ENCODE measurements at regions of chr1 and their contacts with region 1.

Region 1: DNA sequence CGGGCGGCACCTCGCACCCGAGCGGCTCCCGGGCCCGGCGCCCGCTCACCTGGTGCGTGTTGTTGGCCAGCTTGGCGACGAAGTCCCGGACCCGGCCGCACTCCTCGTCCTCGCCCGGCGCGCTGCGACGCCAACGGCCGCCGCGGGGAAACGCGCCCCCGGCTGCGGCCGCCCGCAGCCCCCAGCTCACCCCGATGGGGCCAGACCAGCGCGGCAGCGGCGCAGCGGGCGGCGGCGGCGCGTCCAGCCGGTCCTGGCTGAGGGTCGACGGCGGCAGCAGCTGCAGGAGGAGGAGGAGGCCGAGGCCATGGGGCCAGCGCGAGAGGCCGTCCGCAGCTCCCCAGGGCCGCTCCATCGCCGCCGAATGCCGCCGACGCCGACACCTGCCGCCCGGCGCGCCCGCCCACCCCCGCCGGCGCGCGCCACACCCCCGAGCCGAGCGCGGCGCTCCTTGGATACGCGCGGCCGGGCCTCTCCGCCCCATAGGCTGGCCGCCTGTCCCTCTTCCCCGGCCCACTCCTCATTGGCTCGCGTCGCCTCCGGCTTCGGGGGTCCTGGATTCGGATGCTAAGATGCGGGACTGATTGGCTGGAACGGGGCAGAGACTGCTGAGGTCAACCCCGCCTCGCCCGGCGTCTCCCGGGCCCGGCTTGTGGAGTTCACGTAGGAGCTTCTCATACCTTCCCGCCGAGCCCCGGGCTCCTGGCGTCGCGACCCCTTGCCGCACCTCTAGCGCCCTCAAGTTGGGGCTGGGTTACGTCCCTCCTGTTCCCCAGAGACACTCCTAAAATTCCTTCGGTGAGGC is at the start of gene SORT1:
- DNase-seq: peak; percentile 76
- ATAC-seq: peak; percentile 98
- H3K4me3 Mint-ChIP-seq: peak within 1 kb of the TSS; percentile 68
- H3K27ac Mint-ChIP-seq: no peak within 1 kb of the TSS
- H3K4me1 Mint-ChIP-seq: peaks cover 16% of the 10 kb centered on the region
- H3K27me3 Mint-ChIP-seq: peaks cover 39% of the 10 kb centered on the region
- total RNA-seq, gene SORT1: 5.3 to 8.5 TPM

Region 2: DNA sequence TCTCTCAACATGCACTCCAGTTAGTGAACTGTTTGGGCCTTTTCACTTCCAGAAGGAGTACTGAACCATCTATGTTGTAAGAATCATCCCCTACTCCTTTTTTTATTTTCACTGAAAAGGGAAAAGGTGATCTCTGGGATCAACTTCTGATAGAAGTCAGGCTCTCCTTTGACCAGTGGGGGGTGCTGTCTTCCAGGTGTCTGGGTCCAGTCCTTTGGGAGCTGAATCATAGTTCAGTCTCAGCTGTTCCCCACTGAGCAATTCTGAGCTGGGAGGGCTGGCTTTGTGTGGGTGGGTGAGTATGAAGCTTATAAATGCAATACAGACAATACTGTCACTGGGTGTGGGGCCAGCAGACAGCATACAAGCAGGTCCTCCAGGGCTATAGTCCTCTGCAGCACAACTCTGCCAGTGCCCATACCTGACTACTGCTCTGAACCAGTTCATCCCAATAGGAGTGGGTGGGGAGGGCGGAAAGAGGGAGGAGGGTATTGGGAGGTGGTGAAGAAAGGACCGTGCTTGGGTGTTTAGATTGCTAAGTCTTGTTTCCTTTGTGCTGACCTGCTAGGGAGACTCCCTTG is 196.5 kb before region 1 on chr1:
- CTCF ChIA-PET with region 1: interaction called, 15 read pairs
- DNase-seq: peak; percentile 65
- ATAC-seq: peak; percentile 59
- H3K4me3 Mint-ChIP-seq: no peak overlapping the region
- H3K27ac Mint-ChIP-seq: no peak overlapping the region
- H3K4me1 Mint-ChIP-seq: peaks cover 17% of the 10 kb centered on the region
- H3K27me3 Mint-ChIP-seq: no peaks in the 10 kb centered on the region

Region 3: DNA sequence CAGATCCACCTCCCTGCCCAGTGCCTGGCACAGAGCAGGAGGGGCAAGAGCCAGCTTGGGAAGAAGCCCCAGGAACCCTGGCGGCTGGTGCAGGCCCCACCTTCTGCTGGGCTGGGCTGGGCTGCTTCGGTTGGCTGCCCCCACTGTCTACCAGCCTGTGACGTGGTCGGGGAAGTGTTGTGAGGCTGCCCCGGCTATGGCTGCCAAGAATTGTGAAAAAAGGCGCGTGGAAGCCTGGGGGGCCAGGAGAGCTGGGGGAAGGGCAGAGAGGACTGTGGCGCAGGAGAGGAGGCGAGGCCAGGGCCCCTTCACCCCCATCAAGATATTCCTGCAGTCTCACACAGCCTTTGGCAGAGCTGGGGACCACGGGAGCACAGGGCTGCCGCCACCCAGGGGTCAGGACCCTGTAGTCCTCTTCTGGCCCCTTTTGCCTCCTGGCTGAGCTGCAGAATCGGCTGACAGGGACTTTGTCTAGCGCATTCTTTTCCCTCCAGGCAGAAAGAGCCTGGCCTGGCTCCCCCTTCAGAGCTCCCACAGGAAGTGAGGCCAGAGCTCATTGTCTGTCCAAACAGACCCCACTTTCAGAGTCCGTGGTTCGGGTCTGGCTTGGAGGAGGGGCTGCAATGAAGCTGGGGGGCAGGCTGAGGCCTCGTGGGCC is 144.1 kb before region 1 on chr1:
- CTCF ChIA-PET with region 1: interaction called, 10 read pairs
- DNase-seq: no peak
- ATAC-seq: no peak
- H3K4me3 Mint-ChIP-seq: no peak overlapping the region
- H3K27ac Mint-ChIP-seq: no peak overlapping the region
- H3K4me1 Mint-ChIP-seq: peaks cover 6% of the 10 kb centered on the region
- H3K27me3 Mint-ChIP-seq: peaks cover 10% of the 10 kb centered on the region

Region 4: DNA sequence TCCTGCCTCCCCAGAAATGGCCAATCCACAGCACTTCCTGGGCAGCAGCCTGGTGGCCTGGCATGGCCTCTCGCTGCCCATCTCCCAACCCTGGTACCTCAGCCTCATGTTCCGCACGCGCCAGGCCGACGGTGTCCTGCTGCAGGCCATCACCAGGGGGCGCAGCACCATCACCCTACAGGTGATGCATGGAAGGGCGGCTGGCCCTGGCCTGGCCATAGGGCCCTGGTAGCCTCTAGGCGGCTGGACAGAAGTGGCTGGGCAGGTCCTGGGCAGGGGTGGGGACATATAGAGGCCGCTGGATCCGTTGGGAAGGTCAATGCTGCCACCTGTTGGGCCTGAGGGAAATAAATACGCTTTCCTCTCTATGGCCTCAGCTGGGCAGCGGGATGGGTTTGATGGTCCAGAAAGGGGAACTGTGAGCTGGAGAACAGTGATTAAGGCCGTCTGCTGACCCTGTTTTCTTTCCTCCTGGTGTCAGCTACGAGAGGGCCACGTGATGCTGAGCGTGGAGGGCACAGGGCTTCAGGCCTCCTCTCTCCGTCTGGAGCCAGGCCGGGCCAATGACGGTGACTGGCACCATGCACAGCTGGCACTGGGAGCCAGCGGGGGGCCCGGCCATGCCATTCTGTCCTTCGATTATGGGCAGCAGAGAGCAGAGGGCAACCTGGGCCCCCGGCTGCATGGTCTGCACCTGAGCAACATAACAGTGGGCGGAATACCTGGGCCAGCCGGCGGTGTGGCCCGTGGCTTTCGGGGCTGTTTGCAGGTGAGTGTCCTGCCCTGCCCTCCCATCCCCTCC is 133.9 kb before region 1 on chr1:
- CTCF ChIA-PET with region 1: interaction called, 55 read pairs
- DNase-seq: peak; percentile 83
- ATAC-seq: peak; percentile 95
- H3K4me3 Mint-ChIP-seq: no peak overlapping the region
- H3K27ac Mint-ChIP-seq: no peak overlapping the region
- H3K4me1 Mint-ChIP-seq: peaks cover 2% of the 10 kb centered on the region
- H3K27me3 Mint-ChIP-seq: no peaks in the 10 kb centered on the region

Region 5: GRCh38 chr1:109282952-109283747 is 114.6 kb before region 1 on chr1 and contains the start of gene PSRC1:
- CTCF ChIA-PET with region 1: interaction called, 196 read pairs
- DNase-seq: peak; percentile 94
- ATAC-seq: peak; percentile 97
- H3K4me3 Mint-ChIP-seq: peak within 1 kb of the TSS; percentile 98
- H3K27ac Mint-ChIP-seq: peak within 1 kb of the TSS; percentile 96
- H3K4me1 Mint-ChIP-seq: peaks cover 25% of the 10 kb centered on the region
- H3K27me3 Mint-ChIP-seq: no peaks in the 10 kb centered on the region
- total RNA-seq, gene PSRC1: 19.6 to 36.1 TPM

Region 6: DNA sequence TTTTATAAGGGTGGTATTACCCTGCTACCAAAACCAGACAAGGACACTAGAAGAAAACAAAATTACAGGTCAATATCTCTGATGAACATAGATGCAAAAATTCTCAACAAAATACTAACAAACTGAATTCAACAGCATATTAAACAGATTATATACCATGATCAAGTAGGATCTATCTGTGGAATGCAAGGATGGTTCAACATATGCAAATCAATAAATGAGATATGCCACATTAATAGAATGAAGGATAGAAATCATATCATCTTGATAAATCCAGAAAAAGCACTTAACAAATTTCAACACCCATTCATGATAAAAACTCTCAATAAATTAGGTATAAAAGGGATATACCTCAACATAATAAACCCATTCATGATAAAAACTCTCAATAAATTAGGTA is 66.6 kb before region 1 on chr1:
- CTCF ChIA-PET with region 1: no interaction called
- DNase-seq: no peak
- ATAC-seq: no peak
- H3K4me3 Mint-ChIP-seq: no peak overlapping the region
- H3K27ac Mint-ChIP-seq: no peak overlapping the region
- H3K4me1 Mint-ChIP-seq: no peaks in the 10 kb centered on the region
- H3K27me3 Mint-ChIP-seq: peaks cover 11% of the 10 kb centered on the region

Region 7: DNA sequence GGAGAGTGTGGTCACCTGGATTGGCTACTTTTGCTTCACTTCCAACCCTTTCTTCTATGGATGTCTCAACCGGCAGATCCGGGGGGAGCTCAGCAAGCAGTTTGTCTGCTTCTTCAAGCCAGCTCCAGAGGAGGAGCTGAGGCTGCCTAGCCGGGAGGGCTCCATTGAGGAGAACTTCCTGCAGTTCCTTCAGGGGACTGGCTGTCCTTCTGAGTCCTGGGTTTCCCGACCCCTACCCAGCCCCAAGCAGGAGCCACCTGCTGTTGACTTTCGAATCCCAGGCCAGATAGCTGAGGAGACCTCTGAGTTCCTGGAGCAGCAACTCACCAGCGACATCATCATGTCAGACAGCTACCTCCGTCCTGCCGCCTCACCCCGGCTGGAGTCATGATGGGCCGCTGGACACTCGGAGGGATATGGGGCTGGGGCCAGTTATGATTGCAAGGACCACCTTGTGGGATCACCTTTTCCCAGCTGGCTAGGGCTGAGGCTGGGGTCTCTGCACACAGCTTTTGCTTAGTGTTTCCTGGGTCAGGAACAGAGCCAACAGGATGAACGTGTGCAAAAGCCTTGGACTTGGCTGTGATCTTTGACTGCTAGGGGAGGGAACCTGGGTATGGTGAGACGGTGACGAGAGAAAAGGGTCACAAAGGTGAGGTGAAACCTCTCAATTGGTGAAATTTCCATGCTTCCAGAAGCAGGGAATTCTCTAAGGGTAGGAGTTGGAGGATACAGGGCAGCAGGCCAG is 146.4 kb after region 1 on chr1:
- CTCF ChIA-PET with region 1: no interaction called
- DNase-seq: no peak
- ATAC-seq: no peak
- H3K4me3 Mint-ChIP-seq: no peak overlapping the region
- H3K27ac Mint-ChIP-seq: no peak overlapping the region
- H3K4me1 Mint-ChIP-seq: peaks cover 12% of the 10 kb centered on the region
- H3K27me3 Mint-ChIP-seq: peaks cover 5% of the 10 kb centered on the region

Measured in activated CD8-positive, alpha-beta memory T cell treated with anti-CD3 and anti-CD28 coated beads, Interleukin-2, amount 10 ng/mL, durations not matched to agents 7 days and 5 days (primary cell).